ENCODE measurements at regions of chr17 and their contacts with region 1.

Region 1: DNA sequence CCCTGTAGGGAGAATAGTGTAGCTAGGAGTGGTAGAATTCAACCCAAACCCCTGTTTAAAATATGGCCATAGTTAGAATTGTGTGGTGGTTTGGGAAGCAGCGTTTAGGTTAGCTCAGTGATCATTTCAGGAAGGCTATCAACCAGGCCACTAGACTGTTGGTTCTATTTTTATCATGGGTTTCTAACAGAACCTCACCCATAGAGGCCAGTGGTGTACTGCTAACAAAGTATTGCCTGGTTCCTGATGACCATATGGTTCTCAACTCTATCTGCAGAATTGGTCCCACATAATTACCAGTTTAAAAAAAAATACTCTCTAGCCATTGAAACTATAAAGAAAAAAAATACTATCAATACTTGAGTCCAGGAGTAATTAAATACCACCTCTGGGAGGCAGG is 70.5 kb upstream of the RASL10B start:
- DNase-seq: no peak

Region 2: DNA sequence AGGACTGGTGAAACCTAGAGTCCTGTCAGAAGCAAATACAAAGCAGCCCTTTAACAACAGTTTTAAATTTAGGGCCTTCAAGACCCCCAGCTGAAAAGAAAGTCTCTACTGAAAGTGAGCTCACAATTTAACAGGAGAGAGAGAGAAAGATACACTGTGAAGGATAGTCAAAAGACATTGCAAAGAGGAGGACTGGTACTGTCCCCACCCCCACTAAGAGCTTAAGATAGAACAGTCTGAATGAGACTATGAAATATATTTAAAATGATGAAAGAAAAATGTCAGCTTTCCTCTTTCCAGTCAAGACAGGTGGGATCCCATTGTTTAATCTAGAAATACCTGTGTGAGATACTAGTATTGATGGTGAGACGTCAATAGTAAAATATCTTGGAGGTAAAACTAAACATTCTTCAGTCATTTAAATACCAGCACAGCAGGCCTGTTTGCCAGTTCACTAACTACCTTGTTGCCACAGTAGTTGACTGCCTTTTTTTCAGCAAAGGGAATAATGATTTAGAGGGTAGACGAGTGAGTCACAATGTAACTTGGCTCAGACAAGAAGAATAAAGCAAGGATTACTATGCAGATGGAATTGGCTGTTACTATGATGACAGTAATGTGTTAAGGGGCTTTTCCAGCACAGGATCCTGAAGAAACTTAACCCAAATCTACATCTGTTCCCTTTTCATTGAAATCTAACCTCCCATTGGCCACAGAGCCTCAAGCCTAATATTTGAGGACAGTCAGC is 23.3 kb after region 1 on chr17:
- intact Hi-C with region 1: no loop called
- DNase-seq: no peak

Region 3: DNA sequence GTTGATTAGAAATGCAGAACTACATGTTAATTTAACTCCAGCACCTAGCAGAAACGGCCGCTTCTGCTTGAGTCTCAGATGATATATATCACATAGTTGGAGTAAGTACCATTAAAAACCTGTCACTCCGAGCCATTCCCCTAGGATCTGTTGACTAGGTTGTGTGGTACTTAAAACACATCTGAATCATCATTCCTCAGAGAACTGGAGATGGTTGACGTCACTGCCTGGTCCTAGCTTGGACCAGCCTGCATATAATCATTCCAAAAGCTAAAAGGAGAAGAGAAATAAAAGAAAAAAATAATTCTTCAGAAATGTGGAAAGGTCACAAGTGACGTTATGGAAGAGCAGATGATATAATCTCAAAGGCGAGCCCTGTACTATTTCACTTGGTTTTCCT is 39.2 kb after region 1 on chr17:
- intact Hi-C with region 1: no loop called
- DNase-seq: no peak

Region 4: GRCh38 chr17:35747540-35748017 is 86.7 kb after region 1 on chr17:
- intact Hi-C with region 1: loop called (anchors 2 kb)
- DNase-seq: no peak